Endothelial cell of umbilical vein (primary cell): ENCODE measurements at regions of chr16 and their contacts with region 1.

Region 1: DNA sequence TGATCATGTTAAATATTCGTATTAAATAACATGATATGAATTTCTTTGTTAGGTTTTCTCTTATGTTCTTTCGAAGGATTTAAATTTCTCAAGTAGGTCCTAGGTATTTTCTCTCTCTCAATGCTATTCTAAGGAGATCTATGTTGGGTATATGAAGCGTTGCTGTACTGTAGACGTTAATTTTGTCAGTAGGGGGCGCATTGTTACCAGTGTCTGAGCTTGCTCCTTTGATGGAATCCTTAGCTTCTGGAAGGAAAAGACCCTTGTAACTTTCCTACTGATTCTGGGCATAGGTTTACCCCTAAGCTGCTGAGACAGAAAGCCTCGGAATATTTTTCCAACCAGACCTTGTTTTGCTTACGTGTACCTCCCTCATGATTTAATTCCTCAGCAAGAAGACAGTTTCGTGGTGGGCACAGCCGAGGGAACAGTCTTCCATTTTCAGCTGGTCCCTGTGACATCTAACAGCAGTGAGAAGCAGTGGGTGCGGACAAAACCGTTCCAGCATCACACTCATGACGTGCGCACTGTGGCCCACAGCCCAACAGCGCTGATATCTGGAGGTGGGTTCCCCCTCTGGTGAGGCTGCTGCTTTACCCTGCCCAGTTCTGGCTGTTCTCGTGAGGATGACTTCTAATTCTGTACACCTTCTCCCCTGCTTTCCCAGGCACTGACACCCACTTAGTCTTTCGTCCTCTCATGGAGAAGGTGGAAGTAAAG is 17.9 kb downstream of the UTP4 start:
- DNase-seq: peak; percentile 85
- H3K4me3 ChIP-seq: no peak overlapping the region
- H3K27ac ChIP-seq: no peak overlapping the region
- H3K4me1 ChIP-seq: no peaks in the 10 kb centered on the region
- H3K27me3 ChIP-seq: no peaks in the 10 kb centered on the region
- CTCF ChIP-seq: peak; percentile 59 to 63
- POLR2A ChIP-seq: no peak

Region 2: GRCh38 chr16:69017036-69017783 is 133.1 kb before region 1 on chr16:
- CTCF ChIA-PET with region 1: no interaction called
- POLR2A ChIA-PET with region 1: no interaction called
- dilution Hi-C with region 1: no loop called
- intact Hi-C with region 1: no loop called
- DNase-seq: peak; percentile 92
- H3K4me3 ChIP-seq: no peak overlapping the region
- H3K27ac ChIP-seq: peak overlapping the region; percentile 82
- H3K4me1 ChIP-seq: peaks cover 26% of the 10 kb centered on the region
- H3K27me3 ChIP-seq: no peaks in the 10 kb centered on the region
- CTCF ChIP-seq: no peak
- POLR2A ChIP-seq: no peak

Region 3: DNA sequence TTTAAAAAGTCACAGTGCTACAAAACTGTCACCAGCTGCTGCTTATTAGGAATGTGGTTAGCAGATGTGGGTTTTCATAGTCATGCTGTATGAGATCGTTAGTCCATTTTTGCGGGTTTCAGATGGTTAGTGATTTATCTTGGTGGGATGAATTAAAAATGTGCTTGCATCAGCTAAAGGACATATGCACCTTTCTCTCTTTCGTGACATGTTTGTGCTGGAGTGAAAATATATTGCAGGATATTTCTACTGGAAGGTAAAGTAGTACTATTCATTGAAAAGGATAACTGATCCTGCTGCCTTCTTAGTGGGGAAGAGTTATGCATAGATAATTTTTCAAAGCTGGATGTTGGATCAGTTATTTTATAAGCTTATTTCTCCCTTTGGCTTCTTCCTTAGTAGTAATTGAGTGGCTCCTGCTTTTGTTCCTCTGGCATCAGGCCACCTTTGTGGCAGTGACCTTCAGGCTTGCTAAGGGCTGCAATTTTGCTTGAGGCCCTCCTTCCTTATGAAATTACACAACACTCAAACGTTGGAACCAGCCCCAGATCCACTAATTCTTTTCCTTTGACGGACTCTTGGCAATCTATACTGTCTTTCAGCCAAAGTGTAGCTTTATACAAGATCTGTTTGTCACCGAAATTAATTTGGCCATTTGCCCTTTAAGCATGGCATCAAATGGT is 29.2 kb after region 1 on chr16:
- CTCF ChIA-PET with region 1: interaction called, 13 read pairs
- POLR2A ChIA-PET with region 1: no interaction called
- dilution Hi-C with region 1: no loop called
- intact Hi-C with region 1: no loop called
- DNase-seq: peak; percentile 89
- H3K4me3 ChIP-seq: no peak overlapping the region
- H3K27ac ChIP-seq: no peak overlapping the region
- H3K4me1 ChIP-seq: peaks cover 12% of the 10 kb centered on the region
- H3K27me3 ChIP-seq: no peaks in the 10 kb centered on the region
- CTCF ChIP-seq: no peak
- POLR2A ChIP-seq: no peak

Region 4: DNA sequence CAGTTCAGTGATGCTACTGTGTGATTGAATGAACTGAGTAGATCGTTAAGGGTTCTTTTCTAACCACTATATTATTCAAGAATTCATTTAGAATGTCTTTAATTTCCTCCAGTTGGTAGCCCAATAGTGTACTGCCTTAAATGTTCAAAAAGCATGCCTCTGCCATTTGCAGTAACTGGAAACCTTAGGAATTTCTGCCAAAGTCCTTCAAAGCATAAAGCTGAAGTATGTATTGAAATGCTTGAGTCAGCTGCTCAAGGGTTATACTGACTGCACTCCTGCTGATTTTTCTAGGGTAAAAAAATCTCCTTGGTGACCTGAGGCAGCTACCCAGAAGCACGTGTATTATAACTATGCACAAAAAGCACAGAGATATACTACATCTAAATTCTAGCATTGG is 93.2 kb after region 1 on chr16:
- CTCF ChIA-PET with region 1: interaction called, 12 read pairs
- POLR2A ChIA-PET with region 1: no interaction called
- dilution Hi-C with region 1: no loop called
- intact Hi-C with region 1: no loop called
- DNase-seq: no peak
- H3K4me3 ChIP-seq: no peak overlapping the region
- H3K27ac ChIP-seq: no peak overlapping the region
- H3K4me1 ChIP-seq: peaks cover 2% of the 10 kb centered on the region
- H3K27me3 ChIP-seq: no peaks in the 10 kb centered on the region
- CTCF ChIP-seq: no peak
- POLR2A ChIP-seq: no peak

Region 5: GRCh38 chr16:69276148-69277115 is 126.1 kb after region 1 on chr16:
- CTCF ChIA-PET with region 1: interaction called, 12 read pairs
- POLR2A ChIA-PET with region 1: interaction called, 3 read pairs
- dilution Hi-C with region 1: no loop called
- intact Hi-C with region 1: no loop called
- DNase-seq: no peak
- H3K4me3 ChIP-seq: no peak overlapping the region
- H3K27ac ChIP-seq: no peak overlapping the region
- H3K4me1 ChIP-seq: no peaks in the 10 kb centered on the region
- H3K27me3 ChIP-seq: no peaks in the 10 kb centered on the region
- CTCF ChIP-seq: no peak
- POLR2A ChIP-seq: no peak

Region 6: DNA sequence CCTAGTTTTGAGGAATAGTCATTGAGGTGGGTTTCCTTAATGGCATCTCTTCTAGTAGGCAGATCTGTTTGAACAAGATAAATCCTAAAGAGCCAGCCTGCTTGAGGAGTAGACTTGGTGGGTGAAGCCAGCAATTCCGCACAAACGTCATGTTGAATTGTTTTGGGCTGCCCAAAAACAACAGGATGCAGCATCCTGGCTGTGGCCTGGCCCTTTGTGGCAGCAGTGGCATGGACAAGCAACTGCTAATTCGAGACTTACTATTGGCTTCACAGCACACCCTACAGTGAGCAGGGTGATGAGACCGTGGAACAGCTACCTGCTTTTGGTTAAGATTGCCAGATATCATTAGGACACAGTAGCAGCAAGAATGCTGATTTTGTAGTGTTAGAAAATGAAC is 151.6 kb after region 1 on chr16:
- CTCF ChIA-PET with region 1: interaction called, 30 read pairs
- POLR2A ChIA-PET with region 1: no interaction called
- dilution Hi-C with region 1: no loop called
- intact Hi-C with region 1: no loop called
- DNase-seq: peak; percentile 21
- H3K4me3 ChIP-seq: no peak overlapping the region
- H3K27ac ChIP-seq: peak overlapping the region; percentile 2
- H3K4me1 ChIP-seq: peaks cover 21% of the 10 kb centered on the region
- H3K27me3 ChIP-seq: no peaks in the 10 kb centered on the region
- CTCF ChIP-seq: no peak
- POLR2A ChIP-seq: no peak